ENCODE measurements at regions of chr1 and their contacts with region 1.

Region 1: GRCh38 chr1:2863648-2863963 is 62.1 kb upstream of the TTC34 start:
- DNase-seq: no peak
- ATAC-seq: no peak
- H3K4me3 ChIP-seq: no peak overlapping the region
- H3K27ac ChIP-seq: no peak overlapping the region
- H3K4me1 ChIP-seq: no peaks in the 10 kb centered on the region
- H3K27me3 ChIP-seq: peaks cover 2% of the 10 kb centered on the region; the same call in 1 of the 2 replicates
- CTCF ChIP-seq: no peak

Region 2: GRCh38 chr1:2968471-2968881 is 104.9 kb after region 1 on chr1:
- CTCF ChIA-PET with region 1: no interaction called
- POLR2A ChIA-PET with region 1: interaction called, 10 read pairs
- in situ Hi-C with region 1: no loop called
- intact Hi-C with region 1: no loop called
- DNase-seq: no peak
- ATAC-seq: no peak
- H3K4me3 ChIP-seq: no peak overlapping the region
- H3K27ac ChIP-seq: no peak overlapping the region
- H3K4me1 ChIP-seq: no peaks in the 10 kb centered on the region
- H3K27me3 ChIP-seq: no peaks in the 10 kb centered on the region
- CTCF ChIP-seq: no peak